ENCODE measurements at regions of chr20 and their contacts with region 1.

Region 1: GRCh38 chr20:48620519-48621254 is 207.1 kb downstream of the PREX1 start:
- DNase-seq: peak; percentile 98
- H3K27ac ChIP-seq: peak overlapping the region; percentile 91
- CTCF ChIP-seq: peak; percentile 98

Region 2: GRCh38 chr20:47677635-47678453 is 942.8 kb before region 1 on chr20:
- CTCF ChIA-PET with region 1: interaction called, 44 read pairs
- POLR2A ChIA-PET with region 1: no interaction called
- DNase-seq: peak; percentile 93
- H3K27ac ChIP-seq: peak overlapping the region; percentile 61
- CTCF ChIP-seq: peak; percentile 95

Region 3: GRCh38 chr20:47785854-47786764 is 834.6 kb before region 1 on chr20:
- CTCF ChIA-PET with region 1: interaction called, 24 read pairs
- POLR2A ChIA-PET with region 1: no interaction called
- DNase-seq: peak; percentile 96
- H3K27ac ChIP-seq: peak overlapping the region; percentile 98
- CTCF ChIP-seq: peak; percentile 94

Region 4: GRCh38 chr20:48350313-48351008 is 270.2 kb before region 1 on chr20:
- CTCF ChIA-PET with region 1: interaction called, 13 read pairs
- POLR2A ChIA-PET with region 1: no interaction called
- DNase-seq: no peak
- H3K27ac ChIP-seq: no peak overlapping the region
- CTCF ChIP-seq: no peak

Region 5: DNA sequence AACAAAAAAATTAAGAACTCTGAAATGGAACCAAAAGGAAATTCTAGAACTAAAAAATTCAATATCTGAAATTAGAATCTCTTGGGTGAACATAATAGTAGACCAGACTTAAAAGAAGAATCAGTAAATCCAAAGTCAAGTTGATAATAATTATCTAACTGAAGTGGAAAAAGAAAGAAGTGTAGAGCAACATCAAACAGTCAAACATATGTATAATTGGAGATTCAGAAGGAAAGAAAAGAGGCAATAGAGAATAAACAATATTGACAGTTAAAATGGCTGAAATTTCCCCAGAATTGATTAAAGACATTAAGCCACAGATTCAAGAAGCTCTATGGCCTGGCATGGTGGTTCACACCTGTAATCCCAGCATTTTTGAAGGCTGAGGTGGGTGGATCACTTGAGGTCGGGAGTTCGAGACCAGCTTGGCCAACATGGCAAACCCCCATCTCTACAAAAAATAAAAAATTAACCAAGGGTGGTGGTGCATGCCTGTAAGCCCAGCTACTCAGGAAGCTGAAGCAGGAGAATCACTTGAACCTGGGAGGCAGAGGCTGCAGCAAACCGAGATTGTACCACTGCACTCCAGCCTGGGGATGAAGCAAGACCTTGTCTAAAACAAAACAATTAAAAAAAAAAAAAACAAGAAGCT is 176.3 kb before region 1 on chr20:
- CTCF ChIA-PET with region 1: interaction called, 10 read pairs
- POLR2A ChIA-PET with region 1: no interaction called
- DNase-seq: no peak
- H3K27ac ChIP-seq: no peak overlapping the region
- CTCF ChIP-seq: no peak

Region 6: DNA sequence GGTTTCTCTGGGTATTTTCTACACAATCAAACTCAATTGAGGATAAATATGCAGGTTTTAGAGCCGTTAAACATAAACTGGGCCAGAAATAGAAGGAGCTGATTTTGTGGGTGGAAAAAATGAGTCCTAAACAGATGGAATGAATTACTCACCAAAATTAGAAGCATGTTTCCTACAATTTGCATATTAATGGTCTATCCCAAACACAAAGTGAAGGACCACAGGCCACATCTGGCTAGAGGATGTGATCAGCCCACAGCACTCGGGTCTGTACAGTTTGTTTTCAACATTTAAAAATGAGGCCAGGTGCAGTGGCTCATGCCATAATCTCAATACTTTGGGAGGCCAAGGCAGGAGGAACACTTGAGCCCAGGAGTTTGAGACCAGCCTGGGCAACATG is 89.2 kb before region 1 on chr20:
- CTCF ChIA-PET with region 1: interaction called, 12 read pairs
- POLR2A ChIA-PET with region 1: no interaction called
- DNase-seq: no peak
- H3K27ac ChIP-seq: no peak overlapping the region
- CTCF ChIP-seq: no peak

Region 7: DNA sequence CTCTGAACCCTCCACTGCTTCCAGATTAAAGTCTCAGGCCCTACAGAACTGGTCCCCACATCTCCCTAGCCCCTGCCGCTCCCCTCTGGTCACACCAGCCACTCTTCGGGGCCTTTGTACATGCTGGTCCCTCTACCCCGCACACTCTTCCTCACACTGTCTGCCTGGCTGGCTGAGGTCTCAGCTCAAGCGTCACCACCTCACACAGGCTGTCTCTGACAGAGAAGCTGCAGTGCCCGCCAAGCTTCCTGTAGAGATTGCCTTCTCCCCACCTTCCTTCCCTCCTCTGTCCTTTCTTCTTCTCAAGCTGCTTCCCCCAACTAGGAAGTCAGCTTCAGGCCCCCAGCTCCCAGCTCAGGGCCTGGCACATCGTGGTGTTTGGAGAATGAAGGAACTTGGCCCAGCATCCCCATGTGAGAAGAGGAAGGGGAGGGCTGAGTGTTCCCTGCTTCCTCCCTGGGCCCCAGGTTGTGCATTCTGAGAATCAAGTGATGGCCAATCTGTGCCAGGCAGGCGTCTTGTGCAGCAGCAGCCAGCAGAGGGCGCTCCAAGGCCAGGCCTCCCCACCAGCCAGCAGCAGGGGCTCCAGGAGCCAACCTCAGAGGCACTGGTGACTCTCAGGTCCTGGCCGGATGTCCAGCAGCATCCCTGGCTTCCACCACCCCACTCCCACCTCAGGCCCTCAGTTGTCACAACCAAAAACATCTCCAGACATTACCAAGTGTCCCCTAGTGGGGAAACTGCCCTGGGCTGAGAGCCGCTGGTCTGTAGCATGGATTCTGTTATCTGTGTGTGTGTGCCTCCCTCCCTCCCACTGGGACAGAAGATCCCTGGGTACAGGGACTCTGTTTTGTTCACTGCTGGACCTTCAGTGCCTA is 15.0 kb after region 1 on chr20:
- CTCF ChIA-PET with region 1: interaction called, 20 read pairs
- POLR2A ChIA-PET with region 1: no interaction called
- DNase-seq: peak; percentile 81
- H3K27ac ChIP-seq: no peak overlapping the region
- CTCF ChIP-seq: peak; percentile 98

Region 8: DNA sequence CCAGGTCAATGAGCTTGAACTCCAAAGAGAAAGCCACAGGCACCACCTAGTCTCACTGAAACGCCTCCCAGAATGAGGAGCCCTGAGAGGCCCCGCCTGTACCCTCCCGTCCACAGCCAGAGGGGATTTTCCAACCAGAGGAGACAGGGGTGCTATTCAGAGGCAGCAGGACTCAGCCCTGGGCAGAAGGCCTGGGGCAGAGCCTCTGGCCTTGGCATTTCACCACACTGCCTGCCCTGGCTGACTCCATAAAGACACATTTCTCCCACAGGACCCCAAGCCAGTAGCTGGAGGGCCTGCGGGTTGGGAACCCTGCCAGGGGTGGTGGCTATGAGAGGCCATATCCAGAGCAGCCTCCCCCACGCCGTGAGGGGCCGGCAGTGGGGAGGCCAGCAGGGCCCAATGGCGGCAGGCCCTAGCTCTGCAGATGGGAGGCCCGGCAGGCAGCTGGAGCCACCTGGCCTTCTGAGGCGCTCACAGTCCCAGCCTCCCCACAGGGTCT is 47.8 kb after region 1 on chr20:
- CTCF ChIA-PET with region 1: no interaction called
- POLR2A ChIA-PET with region 1: no interaction called
- DNase-seq: no peak
- H3K27ac ChIP-seq: no peak overlapping the region
- CTCF ChIP-seq: no peak

Region 9: GRCh38 chr20:49028684-49029083 is 408.0 kb after region 1 on chr20:
- CTCF ChIA-PET with region 1: no interaction called
- POLR2A ChIA-PET with region 1: no interaction called
- DNase-seq: peak; percentile 34
- H3K27ac ChIP-seq: no peak overlapping the region
- CTCF ChIP-seq: peak; percentile 55

Measured in RWPE1 (cell line).